ENCODE measurements at regions of chr7 and their contacts with region 1.

Region 1: GRCh38 chr7:10918093-10918590 is 55.5 kb upstream of the PHF14 start:
- DNase-seq: no peak
- ATAC-seq: no peak
- H3K4me3 Mint-ChIP-seq: no peak overlapping the region
- H3K27ac Mint-ChIP-seq: no peak overlapping the region
- H3K4me1 Mint-ChIP-seq: no peaks in the 10 kb centered on the region
- H3K27me3 Mint-ChIP-seq: peaks cover 7% of the 10 kb centered on the region

Region 2: GRCh38 chr7:11911900-11912299 is 993.8 kb after region 1 on chr7:
- CTCF ChIA-PET with region 1: no interaction called
- POLR2A ChIA-PET with region 1: no interaction called
- intact Hi-C with region 1: loop called in 1 of 2 experiments (anchors 5 kb)
- DNase-seq: no peak
- ATAC-seq: no peak
- H3K4me3 Mint-ChIP-seq: no peak overlapping the region
- H3K27ac Mint-ChIP-seq: no peak overlapping the region
- H3K4me1 Mint-ChIP-seq: no peaks in the 10 kb centered on the region
- H3K27me3 Mint-ChIP-seq: no peaks in the 10 kb centered on the region